ENCODE measurements at regions of chr1 and their contacts with region 1.

Region 1: DNA sequence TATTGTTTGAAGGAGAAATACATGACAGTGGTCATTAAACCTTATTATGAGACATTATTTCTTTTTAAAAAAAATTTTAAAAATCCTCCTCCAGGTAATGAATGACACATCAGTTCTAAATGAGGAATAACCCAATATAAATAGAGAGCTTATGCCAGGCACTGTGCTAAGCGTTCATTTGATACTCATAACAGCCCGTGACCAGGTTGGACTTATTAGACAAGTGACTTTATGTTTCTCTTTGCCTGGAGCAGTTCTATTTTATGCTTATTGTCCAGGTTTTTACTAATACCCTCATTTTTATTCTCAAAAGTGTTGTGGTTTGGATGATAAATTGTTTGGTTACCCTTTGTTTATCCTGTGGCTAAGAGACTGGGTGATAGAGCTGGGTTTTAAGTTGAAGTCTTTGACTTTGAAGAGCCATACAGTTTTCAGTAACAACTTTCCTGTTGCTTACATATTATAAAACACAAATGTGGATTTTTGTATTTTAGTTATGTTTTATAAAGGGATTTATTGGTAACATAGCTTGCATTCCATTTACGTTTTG is 84.2 kb downstream of the RABGAP1L start:
- DNase-seq: no peak
- ATAC-seq: peak in 3 of 4 donors; percentile 53 to 75 (median 64)
- H3K4me3 ChIP-seq: no peak overlapping the region
- H3K27ac ChIP-seq: peak overlapping the region in 1 of 12 donors; percentile 17
- H3K4me1 ChIP-seq: peaks cover 0 to 29% (median 0%) of the 10 kb centered on the region in 12 donors
- H3K27me3 ChIP-seq: no peaks in the 10 kb centered on the region
- CTCF ChIP-seq: no peak
- POLR2A ChIP-seq: no peak

Region 2: GRCh38 chr1:174114788-174115448 is 128.6 kb before region 1 on chr1:
- intact Hi-C with region 1: loop called in 1 of 10 experiments (anchors 10 kb)
- DNase-seq: no peak
- ATAC-seq: peak in 3 of 4 donors; percentile 34 to 77 (median 48)
- H3K4me3 ChIP-seq: no peak overlapping the region
- H3K27ac ChIP-seq: no peak overlapping the region
- H3K4me1 ChIP-seq: peaks cover 0 to 17% (median 0%) of the 10 kb centered on the region in 12 donors
- H3K27me3 ChIP-seq: no peaks in the 10 kb centered on the region
- CTCF ChIP-seq: peak; percentile 32 to 75 (median 52)
- POLR2A ChIP-seq: no peak

Measured in heart left ventricle (tissue), 16 donors.